ENCODE measurements at regions of chr7 and their contacts with region 1.

Region 1: DNA sequence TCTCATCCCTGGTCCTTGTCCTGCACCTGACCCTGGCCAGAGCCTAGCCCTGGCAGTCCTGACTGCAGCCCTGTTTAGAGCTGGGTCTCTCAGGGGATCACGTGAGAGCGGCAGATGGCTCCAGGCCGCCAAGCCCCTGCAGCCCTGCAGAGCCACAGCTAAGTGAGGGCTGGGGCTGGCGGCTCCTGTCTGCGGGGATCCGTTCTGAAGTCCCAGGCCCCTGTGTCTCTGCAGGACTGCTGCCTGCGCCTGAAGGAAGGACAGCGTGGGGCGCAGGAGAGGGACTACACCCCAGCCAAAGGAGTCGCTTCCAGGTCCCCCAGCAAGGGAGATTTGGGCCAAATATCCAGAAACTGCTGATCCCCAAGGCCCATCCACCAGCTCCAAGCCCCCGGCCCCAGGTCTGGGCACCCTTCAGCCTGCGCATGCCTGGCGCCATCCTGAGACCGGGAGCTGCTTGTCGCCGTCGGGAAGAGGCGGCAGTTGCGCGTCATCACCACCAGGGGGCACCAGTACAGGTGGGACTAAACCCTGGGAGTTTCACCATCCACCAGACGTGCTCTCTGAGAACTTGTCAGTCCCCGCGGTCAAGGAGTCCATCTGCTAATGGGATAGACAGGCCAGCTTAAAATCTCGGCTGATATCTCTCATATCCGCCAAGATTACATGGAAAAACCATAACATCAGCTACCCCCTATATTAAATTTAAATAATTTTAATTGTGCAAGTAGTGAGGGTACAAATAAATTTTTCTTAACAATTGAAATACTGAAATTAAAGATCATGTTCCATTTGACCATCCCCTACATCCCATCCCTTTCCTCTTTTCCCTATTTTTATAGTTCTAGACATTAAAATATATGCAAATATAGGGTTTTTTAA is 25.1 kb upstream of the GHRHR start:
- DNase-seq: peak; percentile 92
- H3K4me3 ChIP-seq: peak overlapping the region; percentile 33 to 54; a peak in 3 of 4 replicates
- H3K27ac ChIP-seq: peak overlapping the region in 1 of 2 experiments; percentile 67; a peak in 1 of 4 replicates
- H3K4me1 ChIP-seq: peaks cover 0 to 7% of the 10 kb centered on the region in 2 experiments; a peak in 1 of 4 replicates
- H3K27me3 ChIP-seq: no peaks in the 10 kb centered on the region; the same call in 1 of the 2 replicates
- CTCF ChIP-seq: peak; percentile 99
- EP300 ChIP-seq: no peak
- RAD21 ChIP-seq: peak; percentile 76

Region 2: GRCh38 chr7:30791114-30791779 is 147.4 kb before region 1 on chr7:
- CTCF ChIA-PET with region 1: interaction called, 35 read pairs
- POLR2A ChIA-PET with region 1: no interaction called
- DNase-seq: no peak
- H3K4me3 ChIP-seq: no peak overlapping the region
- H3K27ac ChIP-seq: no peak overlapping the region
- H3K4me1 ChIP-seq: peaks cover 3 to 10% of the 10 kb centered on the region in 2 experiments; a peak in 1 of 4 replicates
- H3K27me3 ChIP-seq: no peaks in the 10 kb centered on the region
- CTCF ChIP-seq: no peak
- EP300 ChIP-seq: no peak
- RAD21 ChIP-seq: peak; percentile 2; the same call in 1 of the 2 replicates

Region 3: GRCh38 chr7:30829471-30829870 is 109.2 kb before region 1 on chr7:
- CTCF ChIA-PET with region 1: interaction called, 10 read pairs
- POLR2A ChIA-PET with region 1: no interaction called
- DNase-seq: no peak
- H3K4me3 ChIP-seq: no peak overlapping the region
- H3K27ac ChIP-seq: no peak overlapping the region
- H3K4me1 ChIP-seq: no peaks in the 10 kb centered on the region
- H3K27me3 ChIP-seq: no peaks in the 10 kb centered on the region
- CTCF ChIP-seq: no peak
- EP300 ChIP-seq: no peak
- RAD21 ChIP-seq: no peak

Region 4: GRCh38 chr7:30893357-30893756 is 45.3 kb before region 1 on chr7:
- CTCF ChIA-PET with region 1: interaction called, 25 read pairs
- POLR2A ChIA-PET with region 1: interaction called, 4 read pairs
- DNase-seq: peak; percentile 27
- H3K4me3 ChIP-seq: no peak overlapping the region
- H3K27ac ChIP-seq: no peak overlapping the region
- H3K4me1 ChIP-seq: peaks cover 7 to 20% of the 10 kb centered on the region in 2 experiments; a peak in 2 of 4 replicates
- H3K27me3 ChIP-seq: no peaks in the 10 kb centered on the region
- CTCF ChIP-seq: no peak
- EP300 ChIP-seq: no peak
- RAD21 ChIP-seq: no peak

Region 5: DNA sequence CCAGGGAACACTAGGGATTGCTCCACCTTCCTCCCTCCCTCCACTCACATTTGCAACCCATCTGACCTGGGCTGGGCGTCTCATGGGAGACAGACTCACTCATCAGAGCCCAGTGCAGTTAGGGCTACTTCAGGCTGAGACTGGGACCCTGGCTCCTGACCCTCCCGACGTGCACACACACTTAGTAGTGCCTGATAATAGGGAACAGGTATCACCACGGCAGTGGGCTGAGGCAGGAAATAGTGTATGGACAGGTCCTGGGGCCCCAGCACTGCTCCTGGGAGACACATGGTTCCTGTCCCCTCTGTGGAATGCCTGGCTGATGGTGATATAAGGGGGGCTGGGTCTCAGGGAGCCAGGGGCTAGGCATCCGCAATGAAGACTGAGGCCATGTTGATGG is 12.8 kb before region 1 on chr7:
- CTCF ChIA-PET with region 1: interaction called, 56 read pairs
- POLR2A ChIA-PET with region 1: interaction called, 4 read pairs
- DNase-seq: peak; percentile 88
- H3K4me3 ChIP-seq: no peak overlapping the region
- H3K27ac ChIP-seq: peak overlapping the region in 1 of 2 experiments; percentile 51; a peak in 2 of 4 replicates
- H3K4me1 ChIP-seq: peaks cover 10 to 26% of the 10 kb centered on the region in 2 experiments; a peak in 3 of 4 replicates
- H3K27me3 ChIP-seq: no peaks in the 10 kb centered on the region
- CTCF ChIP-seq: no peak
- EP300 ChIP-seq: no peak
- RAD21 ChIP-seq: no peak

Region 6: GRCh38 chr7:30974605-30975255 is 36.1 kb after region 1 on chr7:
- CTCF ChIA-PET with region 1: interaction called, 66 read pairs
- POLR2A ChIA-PET with region 1: no interaction called
- DNase-seq: peak; percentile 76
- H3K4me3 ChIP-seq: no peak overlapping the region
- H3K27ac ChIP-seq: no peak overlapping the region
- H3K4me1 ChIP-seq: peaks cover 0 to 9% of the 10 kb centered on the region in 2 experiments; a peak in 1 of 4 replicates
- H3K27me3 ChIP-seq: peaks cover 34% of the 10 kb centered on the region; the same call in 1 of the 2 replicates
- CTCF ChIP-seq: peak; percentile 72
- EP300 ChIP-seq: no peak
- RAD21 ChIP-seq: peak; percentile 79

Region 7: GRCh38 chr7:31058122-31058521 is 119.4 kb after region 1 on chr7:
- CTCF ChIA-PET with region 1: interaction called, 15 read pairs
- POLR2A ChIA-PET with region 1: no interaction called
- DNase-seq: no peak
- H3K4me3 ChIP-seq: no peak overlapping the region
- H3K27ac ChIP-seq: no peak overlapping the region
- H3K4me1 ChIP-seq: peaks cover 0 to 28% of the 10 kb centered on the region in 2 experiments; a peak in 1 of 4 replicates
- H3K27me3 ChIP-seq: peaks cover 18% of the 10 kb centered on the region
- CTCF ChIP-seq: no peak
- EP300 ChIP-seq: no peak
- RAD21 ChIP-seq: no peak

Measured in SK-N-SH (cell line).